ENCODE measurements at regions of chr19 and their contacts with region 1.

Region 1: DNA sequence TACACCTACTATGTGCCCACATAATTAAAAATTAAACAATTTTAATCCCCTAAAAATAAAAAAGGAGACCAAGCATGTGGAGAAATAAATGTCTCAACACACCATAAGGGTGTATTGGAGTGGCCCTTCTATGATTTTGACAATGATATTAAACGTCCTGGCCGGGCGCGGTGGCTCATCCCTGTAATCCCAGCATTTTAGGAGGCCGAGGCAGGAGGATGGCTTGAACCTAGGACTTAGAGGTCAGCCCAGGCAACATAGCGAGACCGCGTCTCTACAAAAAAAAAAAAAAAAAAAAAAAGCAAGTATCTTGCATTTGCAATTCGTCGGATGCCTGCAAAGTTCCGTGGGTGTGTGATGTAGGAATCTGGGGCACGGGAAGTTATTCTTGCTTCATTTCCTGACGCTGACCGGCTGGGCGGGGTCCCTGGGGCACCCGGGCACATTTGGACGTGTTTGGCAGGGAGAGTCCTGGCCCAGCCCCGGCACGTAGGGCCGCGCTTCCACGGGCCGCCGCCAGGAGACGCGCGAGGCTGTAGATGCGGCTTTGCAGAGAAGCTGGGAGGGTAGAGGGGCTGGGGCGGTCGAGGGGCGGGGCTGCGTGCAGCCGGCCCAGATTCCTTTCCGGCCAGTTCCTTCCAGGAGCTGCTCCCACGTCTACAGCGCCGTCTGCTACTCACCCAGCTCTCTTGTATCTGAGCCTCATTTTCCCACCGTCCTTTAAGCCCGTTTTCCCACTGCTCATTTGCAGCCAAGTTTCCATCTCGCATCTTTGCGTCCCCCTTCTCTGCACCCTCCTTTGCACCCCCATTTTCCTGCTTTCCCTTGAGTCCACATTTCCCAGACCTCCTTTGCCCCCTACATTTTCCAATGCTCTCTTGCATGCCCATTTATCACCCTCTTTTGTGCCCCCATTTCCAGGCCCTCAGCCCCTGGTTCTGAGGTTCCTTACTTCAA is 2.2 kb upstream of the TSPAN16 start:
- DNase-seq: peak; percentile 97
- ATAC-seq: peak; percentile 96 to 99

Region 2: DNA sequence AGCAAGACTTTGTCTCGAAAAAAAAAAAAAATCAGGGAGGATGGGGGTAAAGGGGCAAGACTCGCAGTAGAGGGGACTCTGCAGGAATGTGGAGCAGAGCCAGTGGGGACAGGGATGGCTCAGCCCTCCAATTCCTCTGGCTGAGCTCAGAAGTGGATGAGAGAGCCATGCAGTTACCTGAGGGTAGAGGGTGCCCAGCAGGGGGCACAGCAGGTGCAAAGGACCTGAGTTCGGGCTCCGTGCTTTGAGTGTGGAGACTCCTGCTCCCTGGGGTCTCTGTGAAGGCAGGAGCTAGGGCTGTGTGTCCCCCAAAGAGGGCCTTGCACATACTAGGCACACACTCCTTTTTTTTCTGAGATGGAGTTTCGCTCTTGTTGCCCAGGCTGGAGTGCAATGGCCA is 39.0 kb before region 1 on chr19:
- intact Hi-C with region 1: no loop called
- DNase-seq: no peak
- ATAC-seq: no peak

Region 3: DNA sequence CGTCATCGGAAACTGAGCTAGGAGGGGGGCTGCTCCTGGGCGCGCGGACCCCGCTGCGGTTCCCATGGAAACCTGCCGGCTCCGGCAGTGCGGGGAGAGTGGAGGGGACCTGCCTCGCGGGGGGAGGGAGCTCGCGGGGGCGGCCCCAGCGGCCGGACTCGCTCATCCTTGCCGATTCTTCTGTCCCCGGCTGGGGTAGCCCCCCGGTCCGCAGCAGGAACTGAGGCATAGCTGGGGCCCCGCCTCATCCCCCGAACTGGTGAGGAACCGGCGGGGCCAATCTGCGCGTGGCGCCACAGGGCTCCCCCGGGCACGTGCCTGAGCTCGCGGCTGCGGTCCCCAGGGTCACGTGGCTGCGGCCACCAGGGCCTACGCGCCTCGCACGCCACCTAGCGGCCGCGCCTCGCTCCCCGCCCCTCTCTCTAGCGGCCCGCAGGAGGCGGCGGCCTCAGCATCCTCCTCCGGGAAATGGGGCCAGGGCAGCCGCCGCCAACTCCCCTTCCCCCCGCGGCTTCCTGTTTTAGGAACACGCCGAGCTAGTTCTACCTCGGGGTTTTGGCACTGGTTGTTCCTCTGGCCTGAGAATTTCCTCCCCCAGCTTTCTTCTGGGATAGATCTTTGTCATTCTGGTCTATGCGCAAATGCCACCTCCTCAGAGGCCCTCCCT is 188.8 kb after region 1 on chr19:
- intact Hi-C with region 1: loop called in 1 of 2 experiments (anchors 10 kb)
- DNase-seq: peak; percentile 90
- ATAC-seq: peak; percentile 89 to 93